Cardiac septum (tissue), 1 donor: ENCODE measurements at regions of chr6 and their contacts with region 1.

Region 1: GRCh38 chr6:125314019-125314581 is 12.3 kb upstream of the HDDC2 start:
- DNase-seq: peak; percentile 79

Region 2: GRCh38 chr6:125769147-125769783 is 455.2 kb after region 1 on chr6:
- intact Hi-C with region 1: loop called (anchors 1 kb)
- DNase-seq: no peak